ENCODE measurements at regions of chr10 and their contacts with region 1.

Region 1: DNA sequence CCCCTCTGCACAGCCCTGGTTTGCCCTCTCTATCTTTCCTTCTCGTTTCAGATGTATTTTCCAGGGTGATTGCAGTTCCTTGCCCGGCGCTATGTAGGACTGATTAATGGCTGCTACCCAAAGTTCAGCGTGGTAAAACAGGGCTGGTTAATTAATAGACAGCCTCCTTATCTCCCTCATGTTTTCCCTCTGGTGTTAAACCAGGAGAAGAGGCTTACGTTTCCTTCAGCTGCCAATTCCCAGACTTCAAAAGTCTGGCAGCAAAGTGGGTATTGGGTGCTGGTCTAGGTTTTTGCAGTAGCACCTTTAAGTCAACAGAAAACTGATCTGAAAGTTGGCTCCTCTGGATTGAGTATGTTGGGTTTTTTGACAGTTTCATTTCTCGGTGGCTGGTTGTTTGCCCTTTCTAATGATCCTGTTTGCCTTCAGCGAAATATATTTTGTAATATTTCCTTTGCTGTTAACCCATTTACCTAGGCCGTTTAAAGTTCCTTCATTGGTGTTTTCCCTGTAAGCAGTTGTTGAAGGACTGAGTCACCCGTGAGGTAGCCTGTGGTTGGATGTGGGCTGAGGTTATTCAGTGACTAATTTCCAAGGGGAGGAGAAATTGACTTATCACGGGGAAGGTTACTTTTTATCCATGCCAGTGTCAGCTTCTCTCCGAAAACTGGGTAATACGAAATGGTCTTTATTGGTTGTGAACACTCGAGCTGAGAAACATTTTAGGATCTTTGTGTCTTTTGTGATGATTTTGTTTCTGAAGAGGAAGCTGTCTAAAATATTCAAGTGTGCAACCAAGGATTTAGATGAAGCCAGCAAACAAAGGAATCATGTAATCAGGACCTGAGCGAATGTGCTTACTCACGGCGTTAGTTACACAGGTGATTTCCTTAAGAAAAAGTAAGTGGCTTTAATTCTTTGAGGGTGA is 257.2 kb downstream of the KIAA1217 start:
- DNase-seq: peak; percentile 84
- H3K4me3 Mint-ChIP-seq: peak overlapping the region; percentile 75
- H3K27ac Mint-ChIP-seq: peak overlapping the region; percentile 86
- H3K4me1 Mint-ChIP-seq: peaks cover 46% of the 10 kb centered on the region
- H3K27me3 Mint-ChIP-seq: peaks cover 14% of the 10 kb centered on the region

Region 2: DNA sequence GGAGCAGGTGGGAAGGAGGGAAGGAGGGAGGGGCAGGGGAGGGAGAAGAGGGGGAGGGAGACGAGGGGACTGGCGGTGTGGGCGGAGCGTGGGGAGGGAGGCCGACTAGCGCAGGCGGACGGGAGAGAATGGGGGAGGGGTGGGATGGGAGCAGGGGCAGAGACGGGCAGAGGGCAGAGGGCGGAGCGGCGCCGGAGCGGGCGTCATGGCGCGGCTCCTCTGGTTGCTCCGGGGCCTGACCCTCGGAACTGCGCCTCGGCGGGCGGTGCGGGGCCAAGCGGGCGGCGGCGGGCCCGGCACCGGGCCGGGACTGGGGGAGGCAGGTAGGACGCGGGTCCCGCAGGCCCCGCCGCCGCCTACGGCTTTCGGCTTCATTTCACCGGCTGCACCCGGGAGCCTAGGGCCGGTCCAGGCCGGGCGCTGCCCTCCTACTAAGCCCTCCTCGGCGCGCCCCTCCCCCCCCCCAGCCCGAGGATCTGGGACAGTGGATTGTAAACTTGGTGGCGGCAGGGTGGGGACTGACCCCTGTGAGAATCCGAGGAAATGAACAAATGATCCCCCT is 1370.7 kb before region 1 on chr10 and contains the start of gene MSRB2:
- intact Hi-C with region 1: loop called (anchors 5 kb)
- DNase-seq: peak; percentile 90
- H3K4me3 Mint-ChIP-seq: peak within 1 kb of the TSS; percentile 89
- H3K27ac Mint-ChIP-seq: peak within 1 kb of the TSS; percentile 93
- H3K4me1 Mint-ChIP-seq: peaks cover 40% of the 10 kb centered on the region
- H3K27me3 Mint-ChIP-seq: peaks cover 18% of the 10 kb centered on the region
- total RNA-seq, gene MSRB2: 3.3 and 3.9 TPM in 2 replicates

Region 3: GRCh38 chr10:24209946-24210491 is 256.1 kb before region 1 on chr10:
- intact Hi-C with region 1: loop called (anchors 1 kb)
- DNase-seq: peak; percentile 65
- H3K4me3 Mint-ChIP-seq: peak overlapping the region; percentile 72
- H3K27ac Mint-ChIP-seq: peak overlapping the region; percentile 90
- H3K4me1 Mint-ChIP-seq: peaks cover 32% of the 10 kb centered on the region
- H3K27me3 Mint-ChIP-seq: peaks cover 33% of the 10 kb centered on the region

Region 4: DNA sequence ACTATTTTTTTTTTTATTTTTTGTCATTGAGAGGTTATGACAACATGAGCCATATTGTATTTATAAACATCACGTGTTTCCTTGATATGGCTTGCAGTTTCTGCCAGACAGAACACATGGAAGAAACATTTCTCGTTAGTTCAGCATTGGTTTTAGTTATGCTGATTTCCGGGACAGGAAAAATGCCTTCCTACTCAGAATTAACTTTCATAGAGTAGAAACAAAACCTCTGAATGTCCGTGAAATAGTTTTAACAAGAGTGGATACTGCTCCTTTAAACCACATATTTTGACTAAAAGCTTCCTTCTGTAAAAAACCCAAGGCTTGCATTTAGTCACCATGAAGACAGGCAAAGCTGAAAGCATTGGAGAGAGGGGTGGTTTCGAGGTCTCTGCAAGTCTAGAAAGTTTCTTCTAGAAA is 16.8 kb before region 1 on chr10:
- intact Hi-C with region 1: loop called (anchors 1 kb)
- DNase-seq: peak; percentile 57
- H3K4me3 Mint-ChIP-seq: peak overlapping the region; percentile 0
- H3K27ac Mint-ChIP-seq: peak overlapping the region; percentile 49
- H3K4me1 Mint-ChIP-seq: peaks cover 28% of the 10 kb centered on the region
- H3K27me3 Mint-ChIP-seq: peaks cover 33% of the 10 kb centered on the region

Region 5: GRCh38 chr10:24826019-24826418 is 359.9 kb after region 1 on chr10:
- intact Hi-C with region 1: loop called (anchors 5 kb)
- DNase-seq: no peak
- H3K4me3 Mint-ChIP-seq: peak overlapping the region; percentile 60
- H3K27ac Mint-ChIP-seq: no peak overlapping the region
- H3K4me1 Mint-ChIP-seq: peaks cover 31% of the 10 kb centered on the region
- H3K27me3 Mint-ChIP-seq: no peaks in the 10 kb centered on the region